Right lobe of liver (tissue), 6 donors: ENCODE measurements at regions of chr14 and their contacts with region 1.

Region 1: GRCh38 chr14:72516936-72517700 is 376.8 kb downstream of the DPF3 start:
- DNase-seq: peak in 1 of 3 donors; percentile 61
- ATAC-seq: peak; percentile 84 to 92 (median 90)
- H3K4me3 ChIP-seq: no peak overlapping the region
- H3K27ac ChIP-seq: no peak overlapping the region
- H3K4me1 ChIP-seq: no peaks in the 10 kb centered on the region
- H3K27me3 ChIP-seq: no peaks in the 10 kb centered on the region
- CTCF ChIP-seq: peak; percentile 84 to 94 (median 84)
- POLR2A ChIP-seq: no peak

Region 2: DNA sequence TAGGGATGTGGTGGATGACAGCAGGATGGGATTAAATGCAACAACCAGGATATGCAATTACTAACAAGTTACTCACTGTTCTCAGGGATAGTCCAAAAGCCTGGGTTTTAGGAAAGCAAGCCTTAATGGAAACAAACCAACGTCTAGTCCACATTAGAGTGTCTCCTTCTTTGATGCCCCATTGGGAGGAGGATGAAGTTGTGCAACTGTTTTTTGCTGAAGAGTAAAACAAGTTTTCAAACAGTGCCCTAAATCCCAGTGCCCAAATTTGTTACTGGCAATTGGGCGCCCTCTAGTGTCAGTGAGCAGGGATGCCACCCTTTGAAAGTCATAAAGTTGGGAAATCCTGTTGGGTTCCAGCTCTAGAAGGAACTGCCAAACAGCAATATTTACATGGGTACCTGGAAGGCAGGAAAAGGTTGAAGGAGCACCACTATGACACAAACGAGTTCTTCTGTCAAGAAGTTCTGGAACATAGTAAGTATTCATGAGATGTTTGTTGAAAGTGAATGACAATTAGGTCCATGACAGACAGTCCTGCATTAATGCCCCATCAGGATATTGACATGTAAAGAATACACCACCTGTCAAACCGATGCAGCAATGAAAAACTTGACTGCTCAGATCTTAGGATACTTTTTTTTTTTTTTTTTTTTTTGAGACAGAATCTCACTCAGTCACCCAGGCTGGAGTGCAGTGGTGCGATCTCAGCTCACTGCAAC is 387.9 kb after region 1 on chr14:
- intact Hi-C with region 1: loop called (anchors 5 kb)
- DNase-seq: peak in 2 of 3 donors; percentile 63 to 73
- ATAC-seq: peak; percentile 95 to 98 (median 96)
- H3K4me3 ChIP-seq: no peak overlapping the region
- H3K27ac ChIP-seq: no peak overlapping the region
- H3K4me1 ChIP-seq: peaks cover 0 to 8% (median 0%) of the 10 kb centered on the region in 4 donors
- H3K27me3 ChIP-seq: no peaks in the 10 kb centered on the region
- CTCF ChIP-seq: peak; percentile 92 to 99 (median 95)
- POLR2A ChIP-seq: no peak

Region 3: GRCh38 chr14:72948481-72949138 is 431.5 kb after region 1 on chr14:
- intact Hi-C with region 1: loop called in 1 of 2 experiments (anchors 5 kb)
- DNase-seq: peak in 1 of 3 donors; percentile 57
- ATAC-seq: peak; percentile 59 to 78 (median 74)
- H3K4me3 ChIP-seq: no peak overlapping the region
- H3K27ac ChIP-seq: no peak overlapping the region
- H3K4me1 ChIP-seq: no peaks in the 10 kb centered on the region
- H3K27me3 ChIP-seq: no peaks in the 10 kb centered on the region
- CTCF ChIP-seq: peak; percentile 72 to 88 (median 84)
- POLR2A ChIP-seq: no peak